HepG2 (cell line): ENCODE measurements at regions of chr10 and their contacts with region 1.

Region 1: GRCh38 chr10:11611248-11612020 is at the start of gene USP6NL:
- DNase-seq: peak; percentile 70
- ATAC-seq: peak; percentile 88
- H3K4me3 ChIP-seq: peak within 1 kb of the TSS; percentile 90 to 96 (median 92)
- H3K27ac ChIP-seq: peak within 1 kb of the TSS; percentile 82
- H3K4me1 ChIP-seq: peaks cover 67% of the 10 kb centered on the region
- H3K27me3 ChIP-seq: no peaks in the 10 kb centered on the region; a peak in 1 of 5 replicates
- CTCF ChIP-seq: no peak
- EP300 ChIP-seq: no peak
- POLR2A ChIP-seq: peak; percentile 43 to 69
- RAD21 ChIP-seq: no peak; the same call in 1 of the 2 replicates
- total RNA-seq, gene USP6NL: 22.9 and 26.2 TPM in 2 replicates

Region 2: DNA sequence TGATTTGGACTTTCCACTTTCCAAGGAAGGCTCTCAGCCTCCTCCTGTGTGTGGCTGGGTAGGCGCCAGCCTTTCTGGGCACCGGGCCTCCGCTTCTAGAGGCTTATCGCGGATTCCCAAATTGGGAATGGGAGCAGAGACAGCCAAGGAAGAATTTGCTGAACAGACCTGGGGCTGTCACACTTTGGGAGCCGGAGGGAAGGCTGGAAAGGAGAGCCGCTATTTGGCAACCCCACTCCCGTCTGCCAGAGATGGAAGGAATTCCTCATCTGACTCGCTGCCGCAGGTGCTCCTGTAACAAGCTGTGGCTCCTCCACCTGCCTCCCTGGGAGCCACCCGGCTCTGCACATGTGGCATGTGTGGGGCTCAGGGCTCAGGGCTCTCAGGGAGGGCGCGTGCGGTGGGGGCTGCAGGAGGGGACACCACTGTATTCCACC is 79.9 kb after region 1 on chr10:
- CTCF ChIA-PET with region 1: no interaction called
- POLR2A ChIA-PET with region 1: no interaction called
- in situ Hi-C with region 1: no loop called
- intact Hi-C with region 1: loop called (anchors 2 kb)
- DNase-seq: no peak
- ATAC-seq: no peak
- H3K4me3 ChIP-seq: no peak overlapping the region
- H3K27ac ChIP-seq: no peak overlapping the region
- H3K4me1 ChIP-seq: peaks cover 74% of the 10 kb centered on the region
- H3K27me3 ChIP-seq: no peaks in the 10 kb centered on the region
- CTCF ChIP-seq: no peak
- EP300 ChIP-seq: no peak
- POLR2A ChIP-seq: no peak
- RAD21 ChIP-seq: no peak